ENCODE measurements at regions of chr16 and their contacts with region 1.

Region 1: DNA sequence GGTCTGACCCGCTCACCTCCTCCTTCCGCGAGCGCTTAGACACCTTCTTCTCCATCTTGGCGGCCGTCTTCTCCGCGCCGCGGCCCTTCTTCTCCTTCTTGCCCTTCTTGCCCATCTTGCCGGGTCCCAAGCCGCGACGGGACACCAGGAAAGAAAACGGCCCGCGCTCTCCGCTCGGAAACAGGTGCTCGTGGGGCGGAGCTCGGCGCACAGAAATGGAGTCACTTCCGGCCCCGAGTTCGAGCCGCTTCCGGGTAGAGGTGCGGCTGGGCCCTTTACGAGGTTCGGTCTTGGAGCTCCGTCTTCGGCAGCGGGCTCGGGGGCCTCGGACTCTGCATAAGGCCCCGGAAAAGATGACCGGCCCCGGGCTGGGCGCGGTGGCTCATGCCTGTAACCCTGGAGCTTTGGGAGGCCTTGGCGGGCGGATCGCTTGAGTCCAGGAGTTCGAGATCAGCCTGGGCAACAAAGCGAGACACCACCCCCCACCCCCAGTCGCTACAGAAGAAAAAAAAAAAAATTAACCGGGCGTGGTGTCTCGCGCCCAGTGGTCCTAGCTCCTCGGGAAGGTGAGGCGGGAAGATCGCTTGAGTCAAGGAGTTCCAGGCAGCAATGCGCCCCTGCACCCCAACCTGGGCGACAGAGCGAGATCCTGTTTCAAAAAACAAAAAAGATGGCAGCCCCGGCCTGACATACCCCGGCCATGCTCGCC is at the start of gene KLHDC4:
- DNase-seq: peak; percentile 90 to 91
- ATAC-seq: peak; percentile 92 to 95
- H3K4me3 ChIP-seq: peak within 1 kb of the TSS; percentile 92
- H3K27ac ChIP-seq: peak within 1 kb of the TSS; percentile 89 to 91
- H3K4me1 ChIP-seq: peaks cover 18% of the 10 kb centered on the region
- CTCF ChIP-seq: no peak
- EP300 ChIP-seq: no peak
- POLR2A ChIP-seq: peak; percentile 74
- RAD21 ChIP-seq: no peak
- polyA plus RNA-seq, gene KLHDC4: 22.6 and 25.9 TPM in 2 replicates

Region 2: GRCh38 chr16:87747626-87748414 is 18.1 kb before region 1 on chr16:
- CTCF ChIA-PET with region 1: interaction called, 15 read pairs
- POLR2A ChIA-PET with region 1: no interaction called
- DNase-seq: no peak
- ATAC-seq: peak; percentile 30 to 62; a peak in 3 of 6 replicates
- H3K4me3 ChIP-seq: no peak overlapping the region
- H3K27ac ChIP-seq: no peak overlapping the region
- H3K4me1 ChIP-seq: no peaks in the 10 kb centered on the region
- CTCF ChIP-seq: no peak
- EP300 ChIP-seq: no peak
- POLR2A ChIP-seq: no peak
- RAD21 ChIP-seq: 0 out of 5 replicates have a peak, but pooled peaks of 1 of the 2 experiments have one; percentile 18

Region 3: DNA sequence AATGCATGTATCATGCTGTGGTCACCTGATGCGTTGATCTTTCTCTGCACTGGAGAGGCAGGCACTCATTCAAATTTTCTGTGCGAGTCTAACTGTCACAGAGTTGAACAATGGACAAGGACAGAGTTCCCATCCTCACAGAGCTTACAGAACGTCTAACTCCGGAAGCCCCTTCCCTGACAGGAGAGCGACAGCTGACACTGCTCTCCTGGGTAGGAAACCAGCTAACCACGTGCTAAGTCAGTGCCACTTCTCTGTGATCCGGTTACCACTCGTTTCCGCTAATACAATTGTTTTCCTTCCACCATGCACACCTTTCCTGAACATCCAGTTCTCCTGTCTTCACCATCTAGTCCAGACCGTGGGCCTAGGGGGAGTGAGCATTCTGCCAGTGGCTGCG is 11.4 kb before region 1 on chr16:
- CTCF ChIA-PET with region 1: interaction called, 15 read pairs
- POLR2A ChIA-PET with region 1: interaction called, 4 read pairs
- DNase-seq: no peak
- ATAC-seq: peak in 1 of 2 experiments; percentile 38; a peak in 1 of 6 replicates
- H3K4me3 ChIP-seq: no peak overlapping the region
- H3K27ac ChIP-seq: no peak overlapping the region
- H3K4me1 ChIP-seq: peaks cover 6% of the 10 kb centered on the region; the same call in 1 of the 3 replicates
- CTCF ChIP-seq: no peak
- EP300 ChIP-seq: no peak
- POLR2A ChIP-seq: no peak
- RAD21 ChIP-seq: no peak

Region 4: GRCh38 chr16:87877938-87878507 is 112.1 kb after region 1 on chr16:
- CTCF ChIA-PET with region 1: interaction called, 46 read pairs
- POLR2A ChIA-PET with region 1: no interaction called
- DNase-seq: no peak
- ATAC-seq: peak in 1 of 2 experiments; percentile 50; a peak in 3 of 6 replicates
- H3K4me3 ChIP-seq: no peak overlapping the region
- H3K27ac ChIP-seq: no peak overlapping the region
- H3K4me1 ChIP-seq: no peaks in the 10 kb centered on the region
- CTCF ChIP-seq: peak; percentile 14; the same call in 1 of the 3 replicates
- EP300 ChIP-seq: no peak
- POLR2A ChIP-seq: no peak
- RAD21 ChIP-seq: 0 out of 5 replicates have a peak, but pooled peaks have one; percentile 15 to 26

Measured in A549 (cell line).